K562 (cell line): ENCODE measurements at regions of chr12 and their contacts with region 1.

Region 1: GRCh38 chr12:54359033-54359761 is 5.1 kb downstream of the GPR84 start:
- DNase-seq: peak; percentile 98 to 100 (median 99)
- ATAC-seq: peak; percentile 88
- H3K4me3 ChIP-seq: peak overlapping the region; percentile 53
- H3K27ac ChIP-seq: peak overlapping the region; percentile 90
- H3K4me1 ChIP-seq: peaks cover 34 to 43% of the 10 kb centered on the region in 2 experiments
- H3K27me3 ChIP-seq: no peaks in the 10 kb centered on the region
- CTCF ChIP-seq: peak in 1 of 3 experiments; percentile 2; a peak in 1 of 6 replicates
- EP300 ChIP-seq: peak; percentile 98
- POLR2A ChIP-seq: peak; percentile 70
- RAD21 ChIP-seq: peak in 1 of 2 experiments; percentile 57; a peak in 3 of 4 replicates

Region 2: DNA sequence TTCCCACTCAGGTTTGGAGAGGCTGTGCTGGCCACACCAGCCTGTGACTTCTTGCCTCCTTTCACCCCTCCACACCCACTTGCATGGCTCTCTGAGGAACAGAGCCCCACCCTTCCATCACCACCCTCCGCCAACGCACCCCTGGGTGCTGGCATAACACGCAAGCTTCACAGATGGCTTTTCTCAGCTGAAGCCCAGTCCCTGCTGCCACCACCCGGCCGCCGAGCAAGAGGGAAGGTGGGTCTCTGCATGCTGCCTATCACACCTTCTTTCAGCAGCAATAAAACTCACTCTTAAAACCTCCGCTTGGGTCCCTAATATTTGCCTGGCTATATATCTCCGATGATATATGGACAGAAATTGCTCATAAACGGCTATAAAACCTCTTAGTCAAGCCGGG is 212.0 kb before region 1 on chr12:
- CTCF ChIA-PET with region 1: no interaction called
- POLR2A ChIA-PET with region 1: no interaction called
- in situ Hi-C with region 1: no loop called
- intact Hi-C with region 1: no loop called
- DNase-seq: no peak
- ATAC-seq: no peak
- H3K4me3 ChIP-seq: no peak overlapping the region
- H3K27ac ChIP-seq: no peak overlapping the region
- H3K4me1 ChIP-seq: no peaks in the 10 kb centered on the region
- H3K27me3 ChIP-seq: peaks cover 4 to 34% of the 10 kb centered on the region in 2 experiments; a peak in 4 of 5 replicates
- CTCF ChIP-seq: no peak
- EP300 ChIP-seq: no peak
- POLR2A ChIP-seq: no peak
- RAD21 ChIP-seq: peak in 1 of 2 experiments; percentile 16; a peak in 1 of 4 replicates

Region 3: GRCh38 chr12:54214553-54215406 is 144.4 kb before region 1 on chr12:
- CTCF ChIA-PET with region 1: interaction called, 34 read pairs
- POLR2A ChIA-PET with region 1: interaction called, 4 read pairs
- in situ Hi-C with region 1: no loop called
- intact Hi-C with region 1: no loop called
- DNase-seq: peak; percentile 88 to 95 (median 94)
- ATAC-seq: peak; percentile 91
- H3K4me3 ChIP-seq: peak overlapping the region; percentile 44
- H3K27ac ChIP-seq: peak overlapping the region; percentile 50; the same call in 2 of the 3 replicates
- H3K4me1 ChIP-seq: peaks cover 25 to 48% of the 10 kb centered on the region in 2 experiments
- H3K27me3 ChIP-seq: no peaks in the 10 kb centered on the region
- CTCF ChIP-seq: peak; percentile 99 to 100 (median 99)
- EP300 ChIP-seq: peak; percentile 40; the same call in 1 of the 2 replicates
- POLR2A ChIP-seq: peak; percentile 47; the same call in 1 of the 2 replicates
- RAD21 ChIP-seq: peak; percentile 70 to 81

Region 4: DNA sequence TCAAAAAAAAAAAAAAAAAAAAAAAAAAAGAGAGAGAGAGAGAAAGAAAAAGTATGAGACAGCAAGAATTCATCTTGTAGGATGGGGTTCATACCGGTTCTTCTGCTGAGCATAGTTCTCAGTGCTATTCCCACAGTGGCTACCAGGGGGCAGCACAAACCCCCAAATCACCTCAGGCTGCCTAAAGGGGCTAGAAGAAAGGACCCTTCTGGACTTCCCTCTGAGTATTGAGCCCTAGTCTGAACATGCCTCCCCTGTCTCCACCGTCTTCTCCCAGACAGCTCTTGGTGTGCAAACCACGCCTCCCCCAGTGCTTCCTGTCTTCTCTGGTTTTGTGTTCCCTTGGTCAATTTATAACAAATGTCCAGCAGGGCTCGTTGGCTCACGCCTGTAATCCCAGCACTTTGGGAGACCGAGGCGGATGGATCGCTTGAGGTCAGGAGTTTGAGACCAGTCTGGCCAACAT is 139.1 kb before region 1 on chr12:
- CTCF ChIA-PET with region 1: interaction called, 34 read pairs
- POLR2A ChIA-PET with region 1: interaction called, 4 read pairs
- in situ Hi-C with region 1: no loop called
- intact Hi-C with region 1: loop called (anchors 1 kb)
- DNase-seq: peak; percentile 75 to 88 (median 78)
- ATAC-seq: peak; percentile 81
- H3K4me3 ChIP-seq: no peak overlapping the region
- H3K27ac ChIP-seq: peak overlapping the region; percentile 66
- H3K4me1 ChIP-seq: peaks cover 29 to 34% of the 10 kb centered on the region in 2 experiments; a peak in 4 of 5 replicates
- H3K27me3 ChIP-seq: no peaks in the 10 kb centered on the region
- CTCF ChIP-seq: peak; percentile 91 to 94 (median 93)
- EP300 ChIP-seq: no peak
- POLR2A ChIP-seq: no peak
- RAD21 ChIP-seq: peak; percentile 95 to 98

Region 5: GRCh38 chr12:54294152-54294952 is 64.8 kb before region 1 on chr12:
- CTCF ChIA-PET with region 1: interaction called, 33 read pairs
- POLR2A ChIA-PET with region 1: interaction called, 20 read pairs
- in situ Hi-C with region 1: loop called (anchors 10 kb)
- intact Hi-C with region 1: loop called (anchors 1 kb)
- DNase-seq: peak; percentile 80 to 93 (median 83)
- ATAC-seq: peak; percentile 34
- H3K4me3 ChIP-seq: peak overlapping the region; percentile 53
- H3K27ac ChIP-seq: peak overlapping the region; percentile 84
- H3K4me1 ChIP-seq: peaks cover 34 to 38% of the 10 kb centered on the region in 2 experiments; a peak in 4 of 5 replicates
- H3K27me3 ChIP-seq: no peaks in the 10 kb centered on the region; a peak in 1 of 5 replicates
- CTCF ChIP-seq: peak; percentile 92 to 96 (median 93)
- EP300 ChIP-seq: peak; percentile 80
- POLR2A ChIP-seq: no peak
- RAD21 ChIP-seq: peak; percentile 92 to 94

Region 6: DNA sequence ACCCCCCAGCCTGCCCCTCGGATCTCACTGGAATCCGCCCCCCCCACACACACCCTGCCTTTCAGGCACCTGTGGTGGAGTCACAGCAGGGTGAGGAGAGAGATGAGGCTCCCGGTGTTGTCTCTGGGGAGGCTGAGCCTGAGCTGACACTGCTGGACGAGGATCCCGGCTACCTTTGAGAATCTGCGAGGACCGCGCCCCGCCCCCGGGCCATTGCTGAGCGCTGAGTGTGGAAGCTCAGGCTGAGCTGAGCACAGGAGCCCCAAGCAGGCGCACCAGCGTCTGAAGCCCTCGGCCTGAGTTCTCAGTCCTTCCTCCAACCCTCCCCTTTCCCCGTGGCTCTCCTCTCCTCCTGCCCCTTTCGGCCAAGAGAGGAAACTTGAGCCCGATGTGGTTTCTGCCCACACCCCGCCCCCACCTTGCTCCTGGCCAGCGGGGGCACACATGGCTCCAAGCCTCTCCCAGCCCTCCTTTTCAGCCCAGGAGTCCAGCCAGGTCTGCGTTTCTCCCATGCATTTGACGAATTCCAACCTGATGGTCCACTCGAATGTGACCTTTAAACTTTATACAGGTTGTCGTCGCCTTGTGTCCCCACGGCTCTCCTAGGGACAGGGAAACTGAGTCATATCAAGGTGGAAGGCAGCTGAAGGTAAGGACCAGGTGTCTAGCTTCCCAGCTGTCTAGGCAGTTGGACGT is 58.3 kb before region 1 on chr12 and contains the start of gene NFE2:
- CTCF ChIA-PET with region 1: interaction called, 33 read pairs
- POLR2A ChIA-PET with region 1: interaction called, 19 read pairs
- in situ Hi-C with region 1: loop called (anchors 10 kb)
- intact Hi-C with region 1: no loop called
- DNase-seq: peak; percentile 70 to 94 (median 74)
- ATAC-seq: peak; percentile 81
- H3K4me3 ChIP-seq: peak within 1 kb of the TSS; percentile 78
- H3K27ac ChIP-seq: peak within 1 kb of the TSS; percentile 88
- H3K4me1 ChIP-seq: peaks cover 29 to 35% of the 10 kb centered on the region in 2 experiments
- H3K27me3 ChIP-seq: no peaks in the 10 kb centered on the region
- CTCF ChIP-seq: peak; percentile 40 to 45 (median 41); a peak in 5 of 6 replicates
- EP300 ChIP-seq: 0 out of 2 replicates have a peak, but pooled peaks have one; percentile 18
- POLR2A ChIP-seq: peak; percentile 93
- RAD21 ChIP-seq: peak in 1 of 2 experiments; percentile 35; a peak in 1 of 4 replicates
- polyA plus RNA-seq, gene NFE2: 12.3 to 44.5 TPM

Region 7: GRCh38 chr12:54324617-54325441 is 34.4 kb before region 1 on chr12 and contains the start of gene COPZ1:
- CTCF ChIA-PET with region 1: interaction called, 4 read pairs
- POLR2A ChIA-PET with region 1: interaction called, 22 read pairs
- in situ Hi-C with region 1: no loop called
- intact Hi-C with region 1: loop called (anchors 5 kb)
- DNase-seq: peak; percentile 89 to 99 (median 93)
- ATAC-seq: peak; percentile 90
- H3K4me3 ChIP-seq: peak within 1 kb of the TSS; percentile 70
- H3K27ac ChIP-seq: peak within 1 kb of the TSS; percentile 96
- H3K4me1 ChIP-seq: peaks cover 31 to 44% of the 10 kb centered on the region in 2 experiments; a peak in 4 of 5 replicates
- H3K27me3 ChIP-seq: no peaks in the 10 kb centered on the region
- CTCF ChIP-seq: peak; percentile 84 to 98 (median 87)
- EP300 ChIP-seq: peak; percentile 67
- POLR2A ChIP-seq: peak; percentile 97
- RAD21 ChIP-seq: peak; percentile 91 to 94
- polyA plus RNA-seq, gene COPZ1: 437 to 487 TPM

Region 8: GRCh38 chr12:54431911-54432814 is 73.0 kb after region 1 on chr12:
- CTCF ChIA-PET with region 1: no interaction called
- POLR2A ChIA-PET with region 1: no interaction called
- in situ Hi-C with region 1: no loop called
- intact Hi-C with region 1: no loop called
- DNase-seq: peak; percentile 71 to 89 (median 86)
- ATAC-seq: peak; percentile 83
- H3K4me3 ChIP-seq: no peak overlapping the region
- H3K27ac ChIP-seq: peak overlapping the region; percentile 29; the same call in 2 of the 3 replicates
- H3K4me1 ChIP-seq: peaks cover 24 to 51% of the 10 kb centered on the region in 2 experiments
- H3K27me3 ChIP-seq: no peaks in the 10 kb centered on the region
- CTCF ChIP-seq: no peak
- EP300 ChIP-seq: no peak; the same call in none of the 2 replicates
- POLR2A ChIP-seq: no peak
- RAD21 ChIP-seq: no peak